Activated CD8-positive, alpha-beta memory T cell treated with anti-CD3 and anti-CD28 coated beads, Interleukin-2, amount 10 ng/mL, durations not matched to agents 7 days and 5 days (primary cell): ENCODE measurements at regions of chr3 and their contacts with region 1.

Region 1: DNA sequence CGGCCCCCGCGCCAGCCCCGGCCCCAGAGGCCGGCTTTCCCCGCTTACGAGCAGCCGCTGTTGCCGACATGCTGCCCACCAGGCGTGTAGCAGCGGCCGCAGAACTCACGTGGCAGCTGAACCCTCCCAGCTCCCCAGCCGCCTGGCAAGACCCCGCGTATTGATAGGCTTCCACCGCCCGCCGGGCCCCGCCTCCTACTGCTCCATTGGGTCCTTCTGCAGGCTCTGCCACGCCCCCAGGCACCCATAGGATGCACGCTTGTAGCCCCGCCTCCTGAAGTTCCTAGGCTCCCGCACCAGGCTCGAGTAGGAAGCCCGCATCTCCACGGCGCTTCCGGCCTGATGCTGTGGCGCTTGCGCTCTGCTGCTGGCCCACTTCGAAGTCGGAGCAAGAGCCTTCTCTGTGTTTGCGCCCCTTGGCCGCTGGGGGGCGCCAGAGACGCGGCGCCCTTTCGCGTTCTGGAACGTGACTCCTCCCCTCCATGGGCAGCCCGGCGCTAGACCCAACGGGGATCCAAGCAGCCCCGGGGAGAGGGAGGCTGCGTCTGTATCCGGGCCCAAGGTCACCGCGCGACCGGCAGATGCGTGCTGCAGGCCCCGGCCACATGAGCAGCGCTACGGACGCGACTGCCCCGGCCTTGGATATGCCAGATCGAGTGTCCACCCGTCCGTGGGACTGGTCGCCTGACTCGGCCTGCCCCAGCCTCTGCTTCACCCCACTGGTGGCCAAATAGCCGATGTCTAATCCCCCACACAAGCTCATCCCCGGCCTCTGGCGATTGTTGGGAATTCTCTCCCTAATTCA is at the starts of genes PARP3 and RRP9:
- DNase-seq: peak; percentile 100
- ATAC-seq: peak; percentile 94
- H3K4me3 Mint-ChIP-seq: peak within 1 kb of the TSS; percentile 80
- H3K27ac Mint-ChIP-seq: peak within 1 kb of the TSS; percentile 88
- H3K4me1 Mint-ChIP-seq: peaks cover 46% of the 10 kb centered on the region
- H3K27me3 Mint-ChIP-seq: no peaks in the 10 kb centered on the region
- total RNA-seq, gene PARP3: 15.8 to 19.0 TPM
- total RNA-seq, gene RRP9: 25.4 to 38.0 TPM

Region 2: GRCh38 chr3:51967384-51968169 is 25.6 kb after region 1 on chr3 and contains the start of gene PCBP4:
- CTCF ChIA-PET with region 1: interaction called, 65 read pairs
- DNase-seq: no peak
- ATAC-seq: peak; percentile 74
- H3K4me3 Mint-ChIP-seq: peak within 1 kb of the TSS; percentile 74
- H3K27ac Mint-ChIP-seq: peak within 1 kb of the TSS; percentile 73
- H3K4me1 Mint-ChIP-seq: peaks cover 14% of the 10 kb centered on the region
- H3K27me3 Mint-ChIP-seq: peaks cover 5% of the 10 kb centered on the region
- total RNA-seq, gene PCBP4: 11.4 to 21.1 TPM

Region 3: GRCh38 chr3:51974963-51975851 is 33.2 kb after region 1 on chr3 and contains the start of gene ABHD14A:
- CTCF ChIA-PET with region 1: interaction called, 65 read pairs
- DNase-seq: peak; percentile 77
- ATAC-seq: peak; percentile 83
- H3K4me3 Mint-ChIP-seq: peak within 1 kb of the TSS; percentile 98
- H3K27ac Mint-ChIP-seq: peak within 1 kb of the TSS; percentile 92
- H3K4me1 Mint-ChIP-seq: peaks cover 30% of the 10 kb centered on the region
- H3K27me3 Mint-ChIP-seq: no peaks in the 10 kb centered on the region
- total RNA-seq, gene ABHD14A: 11.8 to 13.7 TPM

Region 4: DNA sequence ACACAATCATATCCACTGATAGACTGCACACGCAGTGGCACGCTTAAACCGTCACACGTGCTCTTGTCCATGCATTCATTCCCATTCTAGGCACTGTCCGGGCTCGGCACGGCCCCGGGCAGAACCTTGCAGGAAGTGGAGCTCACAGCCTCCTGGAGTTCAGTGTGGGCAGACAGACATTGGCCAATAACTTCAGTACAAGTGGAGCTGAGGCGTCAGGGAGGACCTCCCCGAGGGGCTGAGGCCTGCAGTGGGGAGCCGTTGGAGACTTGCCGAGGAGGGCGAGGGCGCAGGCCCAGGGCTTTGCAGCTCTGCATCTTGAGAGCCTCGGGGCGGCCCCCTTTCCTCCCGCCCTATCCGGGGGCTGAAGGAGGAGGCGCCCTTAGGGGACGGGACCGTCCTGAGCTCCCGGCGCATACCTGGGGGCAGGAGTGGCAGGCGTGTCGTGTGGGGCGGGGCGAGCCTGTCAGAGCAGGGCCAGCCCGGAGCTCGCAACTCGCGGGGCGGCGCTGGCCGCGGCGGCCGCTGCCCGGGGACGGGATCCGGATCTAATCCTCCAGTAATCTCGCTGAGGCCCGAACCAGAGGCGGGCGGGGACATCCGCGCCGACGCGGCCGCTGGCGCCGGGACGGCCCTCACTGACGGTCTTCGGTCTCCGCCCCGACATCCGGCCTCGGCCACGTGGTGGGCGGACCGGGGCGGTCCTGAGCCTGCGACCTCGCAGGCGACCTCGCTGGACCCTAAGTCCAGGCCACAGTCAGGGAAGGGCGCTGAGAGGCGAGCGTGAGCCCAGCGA is 41.0 kb after region 1 on chr3 and contains the start of gene ACY1:
- CTCF ChIA-PET with region 1: interaction called, 24 read pairs
- DNase-seq: peak; percentile 83
- ATAC-seq: peak; percentile 85
- H3K4me3 Mint-ChIP-seq: peak within 1 kb of the TSS; percentile 98
- H3K27ac Mint-ChIP-seq: peak within 1 kb of the TSS; percentile 88
- H3K4me1 Mint-ChIP-seq: peaks cover 29% of the 10 kb centered on the region
- H3K27me3 Mint-ChIP-seq: no peaks in the 10 kb centered on the region
- total RNA-seq, gene ACY1: 18.1 to 21.3 TPM

Region 5: GRCh38 chr3:51995346-51996163 is 53.6 kb after region 1 on chr3 and contains the start of gene RPL29:
- CTCF ChIA-PET with region 1: interaction called, 16 read pairs
- DNase-seq: peak; percentile 94
- ATAC-seq: peak; percentile 95
- H3K4me3 Mint-ChIP-seq: peak within 1 kb of the TSS; percentile 97
- H3K27ac Mint-ChIP-seq: peak within 1 kb of the TSS; percentile 97
- H3K4me1 Mint-ChIP-seq: peaks cover 42% of the 10 kb centered on the region
- H3K27me3 Mint-ChIP-seq: peaks cover 13% of the 10 kb centered on the region
- total RNA-seq, gene RPL29: 1,042 to 1,060 TPM